ENCODE measurements at regions of chr9 and their contacts with region 1.

Region 1: DNA sequence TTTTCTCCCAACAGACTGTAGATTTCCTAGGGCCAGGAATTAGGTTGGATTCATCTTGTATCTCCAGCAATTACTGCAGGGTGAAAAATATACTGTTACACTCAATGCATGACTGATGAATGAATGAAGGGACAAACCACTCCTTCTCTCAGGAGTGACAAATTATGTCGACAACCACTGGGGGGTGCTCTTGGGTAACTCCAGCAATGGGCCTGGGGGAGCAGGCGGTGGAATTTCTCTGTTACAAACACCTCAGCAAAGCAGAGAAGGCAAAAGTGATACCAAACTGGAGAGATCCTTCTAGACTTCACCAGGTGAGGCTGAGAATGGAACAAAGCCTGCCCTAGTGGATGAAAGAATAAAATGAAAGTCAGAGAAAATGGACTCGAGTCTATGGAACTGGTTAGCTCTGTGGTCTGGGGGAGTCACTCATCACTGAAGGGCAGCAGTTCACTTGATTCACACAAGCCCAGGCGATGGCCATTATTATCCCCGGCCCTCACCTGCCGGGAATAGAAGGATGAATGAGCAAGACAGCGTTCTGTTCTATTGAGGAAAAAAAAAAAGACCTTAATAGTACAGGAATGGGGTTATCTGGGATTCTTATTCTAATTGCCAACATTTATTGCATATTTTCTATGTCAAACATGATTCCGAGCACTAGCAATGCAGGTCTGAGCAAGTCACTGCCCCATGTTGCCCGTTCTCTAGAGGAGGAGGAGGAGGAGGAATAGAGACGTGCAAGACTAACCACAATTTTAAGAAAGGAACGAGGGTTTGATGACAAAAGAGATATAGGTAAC is 341.1 kb downstream of the ASTN2 start:
- DNase-seq: no peak
- H3K4me3 ChIP-seq: no peak overlapping the region
- H3K27ac ChIP-seq: no peak overlapping the region
- H3K4me1 ChIP-seq: no peaks in the 10 kb centered on the region
- H3K27me3 ChIP-seq: no peaks in the 10 kb centered on the region
- CTCF ChIP-seq: no peak
- POLR2A ChIP-seq: no peak

Region 2: GRCh38 chr9:117000834-117001233 is 72.9 kb before region 1 on chr9:
- intact Hi-C with region 1: no loop called
- DNase-seq: no peak
- H3K4me3 ChIP-seq: no peak overlapping the region
- H3K27ac ChIP-seq: no peak overlapping the region
- H3K4me1 ChIP-seq: no peaks in the 10 kb centered on the region
- H3K27me3 ChIP-seq: no peaks in the 10 kb centered on the region
- CTCF ChIP-seq: no peak
- POLR2A ChIP-seq: no peak

Region 3: GRCh38 chr9:117138231-117138630 is 64.5 kb after region 1 on chr9:
- intact Hi-C with region 1: loop called (anchors 10 kb)
- DNase-seq: no peak
- H3K4me3 ChIP-seq: no peak overlapping the region
- H3K27ac ChIP-seq: no peak overlapping the region
- H3K4me1 ChIP-seq: no peaks in the 10 kb centered on the region
- H3K27me3 ChIP-seq: no peaks in the 10 kb centered on the region
- CTCF ChIP-seq: no peak
- POLR2A ChIP-seq: no peak

Region 4: DNA sequence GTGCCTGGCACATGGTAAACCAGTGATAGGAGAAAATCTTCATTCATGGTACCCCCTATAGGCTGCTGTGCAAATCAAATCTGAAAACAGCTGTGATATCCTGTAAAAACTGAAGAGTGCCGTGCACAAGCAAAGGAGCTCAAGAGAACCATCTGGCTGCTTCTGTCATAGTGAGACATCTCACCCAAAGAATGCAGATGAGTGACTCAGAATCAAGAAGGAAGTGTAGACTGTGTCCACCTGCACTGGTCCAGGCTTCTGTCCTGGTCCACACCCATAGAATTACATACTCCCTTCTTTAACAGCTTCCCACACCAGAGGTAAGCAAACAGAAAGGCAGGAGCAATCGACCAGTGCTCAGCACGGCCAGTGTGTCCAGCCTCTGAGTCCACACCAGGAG is 145.2 kb after region 1 on chr9:
- intact Hi-C with region 1: no loop called
- DNase-seq: no peak
- H3K4me3 ChIP-seq: no peak overlapping the region
- H3K27ac ChIP-seq: no peak overlapping the region
- H3K4me1 ChIP-seq: no peaks in the 10 kb centered on the region
- H3K27me3 ChIP-seq: no peaks in the 10 kb centered on the region
- CTCF ChIP-seq: no peak
- POLR2A ChIP-seq: no peak